ENCODE measurements at regions of chr7 and their contacts with region 1.

Region 1: GRCh38 chr7:111076205-111076604 is 14.7 kb upstream of the LRRN3 start:
- DNase-seq: no peak
- ATAC-seq: no peak

Region 2: DNA sequence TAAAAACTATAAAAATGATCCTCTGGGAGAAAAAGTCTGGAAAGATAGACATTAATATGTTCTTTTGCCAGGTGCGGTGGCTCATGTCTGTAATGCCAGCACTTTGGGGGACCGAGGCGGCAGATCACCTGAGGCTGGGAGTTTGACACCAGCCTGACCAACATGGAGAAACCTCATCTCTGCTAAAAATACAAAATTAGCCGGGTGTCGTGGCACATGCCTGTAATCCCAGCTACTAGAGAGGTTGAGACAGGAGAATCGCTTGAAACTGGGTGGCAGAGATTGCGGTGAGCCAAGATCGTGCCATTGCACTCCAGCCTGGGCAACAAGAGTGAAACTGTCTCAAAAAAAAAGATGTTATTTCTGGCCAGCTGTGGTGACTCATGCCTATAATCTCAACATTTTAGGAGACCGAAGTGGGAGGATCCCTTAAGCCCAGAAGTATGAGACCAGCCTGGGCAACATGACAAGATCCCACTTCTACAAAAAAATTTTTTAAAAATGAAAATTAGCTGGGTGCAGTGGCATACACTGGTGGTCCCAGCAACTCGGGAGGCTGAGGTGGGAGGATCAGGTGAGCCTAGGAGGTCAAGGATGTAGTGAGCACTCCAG is 87.2 kb before region 1 on chr7:
- intact Hi-C with region 1: loop called (anchors 5 kb)
- DNase-seq: peak; percentile 56
- ATAC-seq: no peak

Region 3: DNA sequence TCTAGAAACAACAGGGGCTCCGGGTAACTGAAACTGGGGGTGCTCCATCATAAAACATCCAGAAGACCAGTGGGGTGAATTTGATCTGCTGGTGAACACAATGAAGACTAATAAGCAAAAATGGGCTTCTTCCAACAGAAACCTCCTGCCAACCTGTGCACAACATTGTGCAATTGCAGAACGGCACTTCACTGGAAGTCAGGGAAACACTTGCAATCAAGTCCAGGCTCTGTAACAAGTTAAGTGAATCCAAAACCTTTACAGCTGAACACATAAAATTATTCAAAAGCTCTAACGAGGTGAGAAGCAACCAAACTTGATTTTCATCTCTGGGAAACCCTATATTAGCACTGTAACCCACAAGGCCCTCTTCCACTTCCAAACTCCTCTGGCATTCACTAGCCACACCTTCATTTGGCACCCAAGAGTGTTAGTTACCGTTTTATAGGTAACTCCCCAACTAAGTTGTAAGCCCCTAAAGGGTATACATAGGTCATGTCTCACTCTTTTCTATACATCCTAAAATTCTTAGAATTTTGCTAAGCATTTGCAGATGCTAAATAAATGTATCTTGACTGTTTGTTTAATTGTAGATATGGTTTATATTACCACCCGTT is 464.1 kb after region 1 on chr7:
- intact Hi-C with region 1: no loop called
- DNase-seq: no peak
- ATAC-seq: no peak

Measured in Right ventricle myocardium inferior (tissue), 1 donor.